HEK293 (cell line): ENCODE measurements at regions of chr6 and their contacts with region 1.

Region 1: GRCh38 chr6:106339334-106340029 is 13.9 kb upstream of the ATG5 start:
- H3K4me3 ChIP-seq: peak overlapping the region; percentile 4; the same call in 1 of the 2 replicates
- H3K27ac ChIP-seq: no peak overlapping the region
- H3K4me1 ChIP-seq: no peaks in the 10 kb centered on the region
- CTCF ChIP-seq: peak; percentile 65

Region 2: DNA sequence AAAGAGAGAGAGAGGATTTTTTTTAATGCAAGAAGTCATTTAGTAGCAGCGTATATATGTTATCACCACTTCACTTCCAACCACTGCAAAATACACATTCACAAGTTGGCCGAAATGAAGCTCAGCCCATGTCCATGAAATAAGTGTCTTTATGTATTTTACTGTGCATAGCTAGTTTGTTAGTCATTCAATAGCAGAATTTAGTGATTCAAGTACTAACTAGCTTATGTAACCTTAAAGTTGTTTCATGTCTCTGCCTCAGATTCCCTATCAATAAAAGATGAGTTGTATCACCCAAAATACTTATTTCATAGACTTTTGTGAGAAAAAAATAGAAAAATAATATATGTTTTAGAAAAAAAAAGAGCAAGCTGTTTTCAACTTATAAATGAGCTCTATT is 407.0 kb before region 1 on chr6:
- CTCF ChIA-PET with region 1: no interaction called
- POLR2A ChIA-PET with region 1: no interaction called
- H3K4me3 ChIP-seq: no peak overlapping the region
- H3K27ac ChIP-seq: no peak overlapping the region
- H3K4me1 ChIP-seq: no peaks in the 10 kb centered on the region
- CTCF ChIP-seq: no peak

Region 3: GRCh38 chr6:106173124-106173879 is 166.2 kb before region 1 on chr6:
- CTCF ChIA-PET with region 1: no interaction called
- POLR2A ChIA-PET with region 1: no interaction called
- H3K4me3 ChIP-seq: no peak overlapping the region
- H3K27ac ChIP-seq: no peak overlapping the region
- H3K4me1 ChIP-seq: no peaks in the 10 kb centered on the region
- CTCF ChIP-seq: no peak

Region 4: DNA sequence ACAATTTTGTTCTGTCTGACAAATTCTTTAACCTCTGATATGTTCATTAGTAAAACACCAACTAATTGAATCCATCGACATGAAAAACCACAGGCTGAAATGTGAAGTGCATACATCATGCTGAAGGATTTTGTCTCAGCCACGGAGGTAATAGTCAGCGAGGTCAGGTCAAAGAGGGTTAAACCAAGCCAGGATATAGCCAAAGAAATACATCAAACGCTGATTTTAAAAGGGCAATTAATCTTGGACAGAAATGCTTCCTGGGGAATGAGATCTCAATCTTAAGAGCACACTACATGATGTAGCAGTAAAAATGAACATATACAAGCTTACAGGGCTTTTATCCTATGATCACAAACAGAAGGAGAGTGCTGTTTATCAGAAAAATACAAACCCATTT is 146.7 kb before region 1 on chr6:
- CTCF ChIA-PET with region 1: no interaction called
- POLR2A ChIA-PET with region 1: no interaction called
- H3K4me3 ChIP-seq: no peak overlapping the region
- H3K27ac ChIP-seq: no peak overlapping the region
- H3K4me1 ChIP-seq: 0 out of 2 replicates have a peak, but pooled peaks cover 4% of the 10 kb centered on the region
- CTCF ChIP-seq: no peak

Region 5: DNA sequence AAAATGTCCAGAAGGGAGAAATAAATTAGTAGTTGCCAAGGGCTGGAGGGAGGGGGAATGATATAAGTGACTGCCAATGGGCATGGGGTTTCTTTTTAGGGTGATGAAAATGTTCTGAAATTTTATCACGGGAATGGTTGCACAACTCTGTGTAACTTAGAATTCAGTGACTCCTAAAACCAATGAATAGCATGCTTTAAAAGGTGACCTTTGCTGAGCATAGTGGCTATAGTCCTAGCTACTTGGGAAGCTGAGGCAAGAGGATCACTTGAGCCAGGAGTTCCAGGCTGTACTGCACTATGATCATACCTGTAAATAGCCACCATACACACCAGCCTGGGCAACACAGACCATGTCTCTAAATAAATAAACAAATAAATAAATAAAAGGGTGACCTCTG is 123.0 kb before region 1 on chr6:
- CTCF ChIA-PET with region 1: no interaction called
- POLR2A ChIA-PET with region 1: no interaction called
- H3K4me3 ChIP-seq: no peak overlapping the region
- H3K27ac ChIP-seq: no peak overlapping the region
- H3K4me1 ChIP-seq: no peaks in the 10 kb centered on the region
- CTCF ChIP-seq: no peak

Region 6: GRCh38 chr6:106325336-106326178 is 13.9 kb before region 1 on chr6 and contains the start of gene ATG5:
- CTCF ChIA-PET with region 1: interaction called, 40 read pairs
- POLR2A ChIA-PET with region 1: interaction called, 8 read pairs
- H3K4me3 ChIP-seq: peak within 1 kb of the TSS; percentile 86
- H3K27ac ChIP-seq: peak within 1 kb of the TSS; percentile 91
- H3K4me1 ChIP-seq: peaks cover 2% of the 10 kb centered on the region; the same call in 1 of the 2 replicates
- CTCF ChIP-seq: peak; percentile 65; the same call in 1 of the 2 replicates

Region 7: DNA sequence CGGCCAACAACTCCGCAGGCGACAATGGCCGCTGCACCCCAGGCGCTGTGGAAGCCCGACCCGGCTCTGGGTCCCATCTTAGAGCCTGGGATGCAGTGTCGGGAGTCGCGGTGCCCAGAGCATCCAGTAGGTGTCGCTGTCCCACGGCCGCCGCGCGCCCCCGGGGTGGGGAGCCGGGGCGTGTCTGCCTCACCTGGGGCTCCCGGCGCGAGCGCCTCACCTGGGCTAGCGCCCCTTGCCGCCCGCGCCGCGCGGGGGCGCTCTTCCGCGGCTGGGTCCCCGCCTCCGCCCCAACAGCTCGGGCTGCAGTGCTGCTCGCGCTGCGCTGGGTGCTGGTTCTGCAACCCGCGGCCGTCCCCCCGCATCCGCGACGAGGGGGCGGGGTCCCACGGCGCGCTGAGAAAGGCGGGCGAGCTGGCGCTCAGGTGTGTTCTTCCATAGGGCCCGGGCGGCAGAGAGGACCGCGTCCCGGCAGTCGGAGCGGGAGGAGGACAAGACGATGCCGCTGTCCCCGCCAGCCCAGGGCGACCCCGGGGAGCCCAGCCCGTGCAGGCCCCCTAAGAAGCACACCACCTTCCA is 21.0 kb after region 1 on chr6 and contains the start of gene CRYBG1:
- CTCF ChIA-PET with region 1: interaction called, 48 read pairs
- POLR2A ChIA-PET with region 1: no interaction called
- H3K4me3 ChIP-seq: peak within 1 kb of the TSS; percentile 68
- H3K27ac ChIP-seq: peak within 1 kb of the TSS; percentile 25; the same call in 1 of the 2 replicates
- H3K4me1 ChIP-seq: 0 out of 2 replicates have a peak, but pooled peaks cover 2% of the 10 kb centered on the region
- CTCF ChIP-seq: peak; percentile 88

Region 8: GRCh38 chr6:106439446-106439845 is 100.0 kb after region 1 on chr6:
- CTCF ChIA-PET with region 1: interaction called, 94 read pairs
- POLR2A ChIA-PET with region 1: no interaction called
- H3K4me3 ChIP-seq: no peak overlapping the region
- H3K27ac ChIP-seq: no peak overlapping the region
- H3K4me1 ChIP-seq: peaks cover 6% of the 10 kb centered on the region; the same call in 1 of the 2 replicates
- CTCF ChIP-seq: no peak

Region 9: DNA sequence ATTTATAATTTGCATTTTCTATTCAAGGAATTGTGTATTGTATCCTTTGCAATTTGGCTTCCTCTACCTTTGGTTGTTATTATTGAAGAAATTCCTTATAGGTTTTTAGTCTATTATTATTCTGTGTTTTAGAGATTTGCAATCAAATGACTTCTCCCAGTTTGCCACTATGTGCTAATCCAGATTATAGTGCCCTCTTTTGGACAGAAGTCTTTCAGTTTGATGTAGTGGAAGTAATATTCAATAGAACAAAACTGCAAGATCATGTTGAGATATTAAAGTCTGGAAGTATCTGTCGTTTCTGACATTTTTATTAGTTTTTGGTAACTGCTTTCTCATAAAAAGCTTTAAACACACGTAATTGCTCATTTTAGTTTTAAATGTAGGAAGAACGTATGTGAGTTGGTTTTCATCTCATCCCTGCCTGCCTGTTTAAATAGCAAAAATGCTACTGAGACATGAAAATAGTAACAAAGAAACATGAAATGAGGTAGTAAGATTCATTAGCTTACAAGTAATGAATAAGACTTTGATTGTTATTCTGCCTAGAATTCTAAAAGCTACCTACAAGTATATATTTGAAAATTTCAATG is 217.0 kb after region 1 on chr6:
- CTCF ChIA-PET with region 1: interaction called, 17 read pairs
- POLR2A ChIA-PET with region 1: no interaction called
- H3K4me3 ChIP-seq: no peak overlapping the region
- H3K27ac ChIP-seq: no peak overlapping the region
- H3K4me1 ChIP-seq: no peaks in the 10 kb centered on the region
- CTCF ChIP-seq: no peak

Region 10: DNA sequence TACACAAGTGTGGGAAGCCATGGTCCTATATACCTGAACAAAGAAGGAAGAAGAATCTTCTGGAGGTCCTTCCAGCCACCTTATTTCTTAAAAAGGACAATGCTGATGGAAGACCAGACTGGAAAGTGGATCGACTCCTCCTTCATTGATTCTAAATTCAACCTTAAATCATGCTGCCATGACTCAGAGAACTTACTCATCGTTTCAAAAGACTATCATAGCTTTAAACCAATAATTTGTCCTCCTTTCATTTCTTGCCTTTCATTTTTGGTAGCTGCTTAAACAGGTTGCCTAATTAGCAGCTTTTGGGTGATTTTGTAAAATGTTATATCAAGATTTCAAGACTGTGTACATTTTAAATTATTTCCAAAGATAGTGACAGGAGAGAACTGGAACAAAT is 229.0 kb after region 1 on chr6:
- CTCF ChIA-PET with region 1: interaction called, 151 read pairs
- POLR2A ChIA-PET with region 1: no interaction called
- H3K4me3 ChIP-seq: no peak overlapping the region
- H3K27ac ChIP-seq: no peak overlapping the region
- H3K4me1 ChIP-seq: no peaks in the 10 kb centered on the region
- CTCF ChIP-seq: no peak